Prostate gland (tissue), 2 donors: ENCODE measurements at regions of chr9 and their contacts with region 1.

Region 1: DNA sequence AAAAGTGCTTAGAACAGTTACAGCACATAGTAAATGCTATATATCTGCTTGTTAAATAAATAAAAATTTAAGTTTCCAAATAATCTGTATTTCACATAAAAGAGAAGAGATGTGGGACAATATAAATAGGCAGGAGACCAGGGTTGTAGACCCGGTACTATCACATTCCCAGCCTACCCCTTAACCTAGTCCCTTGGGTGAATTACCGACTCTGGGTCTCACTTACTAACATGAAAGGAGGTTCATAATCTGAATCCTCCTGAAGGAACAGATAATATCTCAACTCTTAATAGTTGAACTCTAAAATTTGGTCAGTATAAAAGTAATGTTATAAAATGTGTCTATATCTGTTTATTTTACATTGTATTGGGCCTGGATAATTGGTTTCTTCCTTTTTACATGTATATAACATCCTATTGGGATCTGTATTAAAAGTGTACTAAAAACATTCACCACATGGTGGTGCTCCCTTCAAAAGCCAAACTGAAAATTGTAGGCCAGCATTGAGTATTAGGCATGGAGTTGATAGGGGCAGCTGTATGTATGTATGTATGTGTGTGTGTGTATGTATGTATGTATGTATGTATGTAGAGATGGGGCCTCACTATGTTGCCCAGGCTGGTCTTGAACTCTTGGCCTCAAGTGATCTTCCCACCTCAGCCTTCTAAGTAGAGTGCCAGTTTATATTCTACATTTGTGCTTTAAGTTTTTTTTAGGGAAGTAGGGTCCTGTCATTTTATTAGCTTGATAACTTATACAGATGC is 64.2 kb upstream of the ABL1 start:
- DNase-seq: no peak
- H3K4me3 ChIP-seq: no peak overlapping the region
- H3K27ac ChIP-seq: no peak overlapping the region
- H3K4me1 ChIP-seq: no peaks in the 10 kb centered on the region
- H3K27me3 ChIP-seq: no peaks in the 10 kb centered on the region
- CTCF ChIP-seq: peak in 3 of 4 experiments; percentile 64 to 78 (median 73)
- POLR2A ChIP-seq: no peak

Region 2: DNA sequence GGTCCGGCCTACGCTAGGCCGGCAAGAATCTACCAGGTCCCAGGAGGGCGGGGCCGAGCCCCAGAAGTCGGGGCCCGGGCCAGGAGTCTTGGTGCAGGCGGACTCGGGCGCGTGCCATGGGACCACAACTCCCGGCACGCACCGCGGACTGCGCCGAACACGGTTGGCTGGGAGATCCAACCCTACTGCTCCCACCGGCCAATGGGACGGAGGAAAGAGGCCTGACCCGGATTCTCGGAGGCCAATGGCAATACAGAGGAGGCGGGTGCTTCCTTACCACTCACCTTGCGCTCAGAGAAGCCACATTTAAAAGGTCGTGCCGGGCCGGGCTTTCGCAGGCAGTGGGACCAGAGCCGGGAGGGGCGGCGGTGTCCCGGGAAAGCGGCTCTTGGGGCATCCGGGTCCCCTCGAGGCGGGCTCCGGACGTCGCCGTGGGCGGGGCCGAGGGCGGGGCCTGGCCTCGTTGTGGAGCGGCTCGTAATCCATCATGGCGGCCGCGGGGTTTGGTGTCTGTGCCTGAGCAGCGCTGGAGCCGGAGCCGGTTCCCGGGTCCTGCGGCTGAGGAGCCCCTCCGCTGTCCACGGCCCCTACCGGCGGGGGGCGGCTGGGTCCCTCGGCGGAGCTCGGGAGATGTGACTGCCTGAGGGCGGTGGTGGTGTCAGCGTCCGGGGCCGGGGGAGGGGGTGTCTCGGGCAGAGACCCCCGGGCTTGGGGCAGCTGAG is 58.1 kb before region 1 on chr9:
- intact Hi-C with region 1: loop called (anchors 5 kb)
- DNase-seq: peak; percentile 99
- H3K4me3 ChIP-seq: peak overlapping the region; percentile 83 to 99
- H3K27ac ChIP-seq: peak overlapping the region; percentile 99
- H3K4me1 ChIP-seq: no peaks in the 10 kb centered on the region
- H3K27me3 ChIP-seq: no peaks in the 10 kb centered on the region
- CTCF ChIP-seq: no peak
- POLR2A ChIP-seq: peak; percentile 80

Region 3: GRCh38 chr9:130860458-130861316 is 89.8 kb after region 1 on chr9:
- intact Hi-C with region 1: loop called (anchors 2 kb)
- DNase-seq: no peak
- H3K4me3 ChIP-seq: no peak overlapping the region
- H3K27ac ChIP-seq: peak overlapping the region; percentile 14 to 41
- H3K4me1 ChIP-seq: no peaks in the 10 kb centered on the region
- H3K27me3 ChIP-seq: no peaks in the 10 kb centered on the region
- CTCF ChIP-seq: peak in 3 of 4 experiments; percentile 14 to 47 (median 43)
- POLR2A ChIP-seq: no peak

Region 4: GRCh38 chr9:130940693-130941576 is 170.1 kb after region 1 on chr9:
- intact Hi-C with region 1: loop called (anchors 5 kb)
- DNase-seq: peak; percentile 84
- H3K4me3 ChIP-seq: no peak overlapping the region
- H3K27ac ChIP-seq: no peak overlapping the region
- H3K4me1 ChIP-seq: peaks cover 7% of the 10 kb centered on the region
- H3K27me3 ChIP-seq: no peaks in the 10 kb centered on the region
- CTCF ChIP-seq: peak; percentile 52 to 94 (median 88)
- POLR2A ChIP-seq: no peak

Region 5: DNA sequence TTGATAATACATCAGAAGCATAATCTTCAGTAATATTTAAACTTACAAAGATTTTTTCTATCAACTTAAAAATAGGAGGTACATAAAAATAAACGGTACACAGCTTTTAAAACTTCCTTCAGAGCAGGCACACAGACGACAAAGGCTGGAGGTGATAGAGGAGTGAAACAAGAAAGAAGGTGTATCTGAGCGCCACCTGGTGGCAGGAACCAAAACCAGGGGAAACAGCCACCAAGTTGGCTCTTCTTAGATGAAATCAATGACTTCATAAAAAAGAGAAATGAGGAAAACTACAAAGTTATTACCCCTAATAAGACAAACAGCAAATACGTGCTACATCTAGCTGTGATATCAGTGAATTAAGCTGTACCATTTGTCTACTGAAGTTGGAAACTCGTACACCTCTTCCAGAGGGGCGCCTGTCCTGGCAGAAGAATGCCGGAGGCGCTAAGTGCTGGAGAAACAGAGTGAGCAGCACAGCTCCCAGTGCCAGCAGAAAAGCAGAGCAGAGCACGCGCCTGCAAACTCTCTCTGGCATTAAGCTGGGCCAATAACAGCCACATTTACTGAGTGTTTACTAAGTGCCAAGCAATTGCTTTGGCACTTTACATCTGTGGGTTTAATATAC is 1498.0 kb after region 1 on chr9:
- intact Hi-C with region 1: no loop called
- DNase-seq: peak; percentile 72
- H3K4me3 ChIP-seq: no peak overlapping the region
- H3K27ac ChIP-seq: peak overlapping the region in 1 of 2 donors; percentile 15
- H3K4me1 ChIP-seq: no peaks in the 10 kb centered on the region
- H3K27me3 ChIP-seq: no peaks in the 10 kb centered on the region
- CTCF ChIP-seq: peak; percentile 70 to 86 (median 76)
- POLR2A ChIP-seq: no peak